T-cell (primary cell): ENCODE measurements at regions of chr13 and their contacts with region 1.

Region 1: DNA sequence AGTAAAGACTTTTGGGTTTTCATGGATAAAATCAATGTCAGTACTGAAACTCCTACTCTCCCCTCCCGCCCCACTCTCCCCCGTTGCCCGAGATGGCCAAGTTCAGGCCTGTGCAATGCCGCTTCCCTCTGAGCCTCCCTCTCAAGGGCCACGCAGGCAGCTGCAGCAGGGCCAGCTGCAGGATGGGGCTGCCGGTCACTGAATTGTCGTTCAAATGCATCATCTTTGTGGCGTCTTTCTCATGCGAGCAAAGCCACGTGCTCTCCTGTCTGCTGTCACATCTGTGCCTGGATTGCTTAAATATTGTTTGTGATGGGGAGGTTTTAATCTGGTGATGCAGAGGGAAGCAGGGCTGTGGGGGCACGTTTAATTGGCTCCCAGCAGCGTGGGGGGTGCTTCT is 26.6 kb downstream of the SHISA2 start:
- DNase-seq: no peak
- ATAC-seq: no peak
- H3K4me3 ChIP-seq: no peak overlapping the region
- H3K4me3 Mint-ChIP-seq: no peak overlapping the region
- H3K27ac ChIP-seq: no peak overlapping the region
- H3K27ac Mint-ChIP-seq: no peak overlapping the region
- H3K4me1 ChIP-seq: no peaks in the 10 kb centered on the region
- H3K4me1 Mint-ChIP-seq: no peaks in the 10 kb centered on the region
- H3K27me3 ChIP-seq: peaks cover 0 to 6% of the 10 kb centered on the region in 2 experiments
- H3K27me3 Mint-ChIP-seq: peaks cover 0 to 3% of the 10 kb centered on the region in 2 donors

Region 2: GRCh38 chr13:25707726-25708125 is 317.5 kb before region 1 on chr13:
- CTCF ChIA-PET with region 1: no interaction called
- POLR2A ChIA-PET with region 1: interaction called in 1 of 2 experiments, 16 read pairs
- DNase-seq: no peak
- ATAC-seq: no peak
- H3K4me3 ChIP-seq: no peak overlapping the region
- H3K4me3 Mint-ChIP-seq: no peak overlapping the region
- H3K27ac ChIP-seq: no peak overlapping the region
- H3K27ac Mint-ChIP-seq: no peak overlapping the region
- H3K4me1 ChIP-seq: no peaks in the 10 kb centered on the region
- H3K4me1 Mint-ChIP-seq: no peaks in the 10 kb centered on the region
- H3K27me3 ChIP-seq: peaks cover 0 to 5% of the 10 kb centered on the region in 2 experiments
- H3K27me3 Mint-ChIP-seq: peaks cover 0 to 4% of the 10 kb centered on the region in 2 donors

Region 3: DNA sequence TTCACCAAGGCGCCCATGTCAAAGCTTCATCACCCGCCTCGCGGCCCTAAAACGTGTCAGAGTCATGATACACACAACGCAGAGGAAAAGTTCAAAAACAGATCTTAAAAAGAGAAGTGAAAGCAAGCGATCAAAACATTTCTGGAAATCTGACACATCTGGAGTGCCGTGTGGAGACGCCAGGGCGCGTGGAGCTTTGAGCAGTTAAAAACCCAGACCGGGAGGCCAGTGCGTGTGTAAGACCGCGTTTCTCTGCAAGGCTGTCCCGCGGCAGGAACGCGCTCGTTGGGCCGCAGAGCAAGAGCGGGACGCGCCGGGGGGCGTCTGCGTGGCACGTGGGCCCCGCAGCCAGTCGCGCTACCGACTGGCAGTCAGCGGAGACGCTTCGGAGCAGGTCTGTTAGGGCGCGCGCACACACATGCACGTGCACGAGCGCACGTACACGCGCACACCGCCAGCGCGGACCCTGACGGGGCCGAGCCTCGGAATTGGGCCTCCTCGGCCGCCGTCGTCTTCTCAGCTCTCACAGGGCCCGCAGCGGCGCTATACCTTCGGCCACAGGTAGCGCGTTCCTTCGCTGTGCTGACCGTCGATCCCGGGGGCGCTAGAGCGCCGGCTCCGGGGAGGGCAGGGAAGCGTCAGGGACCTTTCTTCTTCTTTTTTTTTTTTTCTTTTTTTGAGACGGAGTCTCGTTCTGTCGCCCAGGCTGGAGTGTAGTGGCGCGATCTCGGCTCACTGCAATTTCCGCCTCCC is 161.1 kb after region 1 on chr13:
- CTCF ChIA-PET with region 1: no interaction called
- POLR2A ChIA-PET with region 1: no interaction called
- DNase-seq: peak; percentile 80 to 97 (median 87)
- ATAC-seq: peak; percentile 85 to 90 (median 87)
- H3K4me3 ChIP-seq: peak overlapping the region; percentile 76
- H3K4me3 Mint-ChIP-seq: peak overlapping the region; percentile 85 to 94 (median 90)
- H3K27ac ChIP-seq: peak overlapping the region; percentile 66
- H3K27ac Mint-ChIP-seq: peak overlapping the region; percentile 92 to 96
- H3K4me1 ChIP-seq: peaks cover 3 to 18% of the 10 kb centered on the region in 2 experiments
- H3K4me1 Mint-ChIP-seq: peaks cover 20 to 34% (median 22%) of the 10 kb centered on the region in 3 donors
- H3K27me3 ChIP-seq: no peaks in the 10 kb centered on the region
- H3K27me3 Mint-ChIP-seq: no peaks in the 10 kb centered on the region

Region 4: DNA sequence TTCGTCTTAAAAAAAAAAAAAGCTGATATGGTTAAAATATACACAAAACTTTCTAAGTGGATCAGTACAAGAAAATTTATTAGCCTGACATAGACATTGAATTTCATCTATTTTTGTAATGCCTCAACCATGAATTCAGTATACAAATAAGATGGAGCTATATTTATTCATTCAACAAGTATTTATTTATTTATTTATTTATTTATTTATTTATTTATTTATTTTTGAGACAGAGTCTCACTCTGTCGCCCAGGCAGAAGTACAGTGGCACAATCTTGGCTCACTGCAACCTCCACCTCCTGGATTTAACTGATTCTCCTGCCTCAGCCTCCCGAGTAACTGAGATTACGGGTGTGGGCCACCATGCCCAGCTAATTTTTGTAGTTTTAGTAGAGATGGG is 1688.6 kb after region 1 on chr13:
- CTCF ChIA-PET with region 1: interaction called in 1 of 2 experiments, 11 read pairs
- POLR2A ChIA-PET with region 1: no interaction called
- DNase-seq: no peak
- ATAC-seq: no peak
- H3K4me3 ChIP-seq: no peak overlapping the region
- H3K4me3 Mint-ChIP-seq: no peak overlapping the region
- H3K27ac ChIP-seq: no peak overlapping the region
- H3K27ac Mint-ChIP-seq: no peak overlapping the region
- H3K4me1 ChIP-seq: no peaks in the 10 kb centered on the region
- H3K4me1 Mint-ChIP-seq: no peaks in the 10 kb centered on the region
- H3K27me3 ChIP-seq: peaks cover 0 to 16% of the 10 kb centered on the region in 2 experiments
- H3K27me3 Mint-ChIP-seq: peaks cover 7 to 12% of the 10 kb centered on the region in 2 donors